ENCODE measurements at regions of chr22 and their contacts with region 1.

Region 1: DNA sequence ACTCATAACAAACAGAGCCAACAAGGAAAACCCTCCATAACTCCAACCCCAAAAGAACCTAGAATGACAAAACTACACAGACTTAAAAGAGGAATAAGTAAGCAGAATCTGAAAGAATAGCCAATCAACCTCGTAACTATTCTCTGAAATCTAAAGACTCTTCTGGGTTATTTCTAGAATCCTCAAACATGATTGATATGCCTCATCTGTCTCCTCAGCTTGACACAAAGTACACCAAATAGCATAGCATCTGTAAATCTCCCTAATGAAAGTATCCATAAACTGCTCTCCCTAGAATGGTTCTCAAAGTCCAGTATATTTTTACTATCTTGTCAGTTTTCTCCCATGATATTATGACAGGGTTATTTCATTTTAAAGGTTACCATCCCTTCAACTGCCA is 195.0 kb downstream of the TTC28 start:
- DNase-seq: no peak
- ATAC-seq: no peak
- H3K4me3 ChIP-seq: no peak overlapping the region
- H3K27ac ChIP-seq: no peak overlapping the region
- H3K4me1 ChIP-seq: no peaks in the 10 kb centered on the region
- H3K27me3 ChIP-seq: peaks cover 64% of the 10 kb centered on the region
- CTCF ChIP-seq: no peak
- POLR2A ChIP-seq: no peak
- RAD21 ChIP-seq: no peak

Region 2: DNA sequence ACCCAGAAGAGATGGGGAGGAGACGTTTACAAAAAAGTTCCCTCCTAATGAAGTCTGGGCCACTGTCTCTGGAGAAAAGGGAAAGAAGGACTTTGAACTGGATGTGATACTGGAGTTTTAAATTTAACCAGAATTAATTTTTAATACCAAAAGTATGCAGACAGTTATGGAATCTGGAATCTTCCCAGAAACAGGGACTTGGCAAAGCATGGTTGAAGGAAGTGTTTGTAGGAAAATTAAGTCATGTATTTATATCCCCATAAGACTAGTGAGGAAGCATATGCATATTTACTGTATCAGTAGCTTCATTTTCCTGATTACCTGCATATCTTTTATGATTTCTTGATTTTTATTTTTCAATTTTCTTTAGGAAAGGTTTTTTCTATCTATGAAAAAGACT is 20.5 kb before region 1 on chr22:
- CTCF ChIA-PET with region 1: no interaction called
- POLR2A ChIA-PET with region 1: no interaction called
- RAD21 ChIA-PET with region 1: no interaction called
- intact Hi-C with region 1: loop called (anchors 1 kb)
- DNase-seq: no peak
- ATAC-seq: no peak
- H3K4me3 ChIP-seq: no peak overlapping the region
- H3K27ac ChIP-seq: no peak overlapping the region
- H3K4me1 ChIP-seq: no peaks in the 10 kb centered on the region
- H3K27me3 ChIP-seq: peaks cover 44% of the 10 kb centered on the region
- CTCF ChIP-seq: no peak
- POLR2A ChIP-seq: no peak
- RAD21 ChIP-seq: no peak

Region 3: GRCh38 chr22:28474330-28474729 is 10.3 kb before region 1 on chr22:
- CTCF ChIA-PET with region 1: no interaction called
- POLR2A ChIA-PET with region 1: no interaction called
- RAD21 ChIA-PET with region 1: no interaction called
- intact Hi-C with region 1: no loop called
- DNase-seq: no peak
- ATAC-seq: no peak
- H3K4me3 ChIP-seq: no peak overlapping the region
- H3K27ac ChIP-seq: no peak overlapping the region
- H3K4me1 ChIP-seq: no peaks in the 10 kb centered on the region
- H3K27me3 ChIP-seq: peaks cover 69% of the 10 kb centered on the region
- CTCF ChIP-seq: no peak
- POLR2A ChIP-seq: no peak
- RAD21 ChIP-seq: no peak

Region 4: GRCh38 chr22:28505416-28506149 is 20.9 kb after region 1 on chr22:
- CTCF ChIA-PET with region 1: no interaction called
- POLR2A ChIA-PET with region 1: no interaction called
- RAD21 ChIA-PET with region 1: no interaction called
- intact Hi-C with region 1: no loop called
- DNase-seq: no peak
- ATAC-seq: no peak
- H3K4me3 ChIP-seq: no peak overlapping the region
- H3K27ac ChIP-seq: no peak overlapping the region
- H3K4me1 ChIP-seq: no peaks in the 10 kb centered on the region
- H3K27me3 ChIP-seq: peaks cover 51% of the 10 kb centered on the region
- CTCF ChIP-seq: no peak
- POLR2A ChIP-seq: no peak
- RAD21 ChIP-seq: no peak

Measured in HCT116 (cell line).